ENCODE measurements at regions of chr10 and their contacts with region 1.

Region 1: DNA sequence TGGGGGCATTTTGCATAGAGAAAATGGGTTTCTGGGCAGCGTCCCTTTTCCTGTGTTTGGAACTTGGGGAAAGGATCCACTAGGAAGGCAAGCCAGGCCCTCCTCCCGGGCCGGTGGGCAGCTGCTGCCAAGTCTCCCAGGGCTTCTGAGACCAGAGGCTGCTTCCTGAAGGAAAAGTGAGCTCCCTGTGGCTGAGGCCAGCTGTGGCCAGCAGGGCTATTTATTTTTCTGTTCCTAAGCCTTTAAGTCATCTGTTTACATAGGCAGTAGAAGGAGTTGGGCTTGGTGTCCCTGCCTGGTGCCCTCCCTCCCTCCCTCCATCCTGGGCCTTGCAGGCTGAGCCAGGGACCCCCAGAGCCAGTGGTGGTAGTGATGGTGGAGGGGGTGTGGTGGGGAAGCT is 70.5 kb upstream of the COL13A1 start:
- DNase-seq: peak; percentile 91
- ATAC-seq: peak; percentile 75
- H3K4me3 ChIP-seq: no peak overlapping the region
- H3K27ac ChIP-seq: peak overlapping the region; percentile 69
- H3K4me1 ChIP-seq: peaks cover 56% of the 10 kb centered on the region
- H3K27me3 ChIP-seq: no peaks in the 10 kb centered on the region
- CTCF ChIP-seq: peak; percentile 29
- POLR2A ChIP-seq: no peak
- RAD21 ChIP-seq: peak; percentile 31; the same call in 1 of the 2 replicates

Region 2: DNA sequence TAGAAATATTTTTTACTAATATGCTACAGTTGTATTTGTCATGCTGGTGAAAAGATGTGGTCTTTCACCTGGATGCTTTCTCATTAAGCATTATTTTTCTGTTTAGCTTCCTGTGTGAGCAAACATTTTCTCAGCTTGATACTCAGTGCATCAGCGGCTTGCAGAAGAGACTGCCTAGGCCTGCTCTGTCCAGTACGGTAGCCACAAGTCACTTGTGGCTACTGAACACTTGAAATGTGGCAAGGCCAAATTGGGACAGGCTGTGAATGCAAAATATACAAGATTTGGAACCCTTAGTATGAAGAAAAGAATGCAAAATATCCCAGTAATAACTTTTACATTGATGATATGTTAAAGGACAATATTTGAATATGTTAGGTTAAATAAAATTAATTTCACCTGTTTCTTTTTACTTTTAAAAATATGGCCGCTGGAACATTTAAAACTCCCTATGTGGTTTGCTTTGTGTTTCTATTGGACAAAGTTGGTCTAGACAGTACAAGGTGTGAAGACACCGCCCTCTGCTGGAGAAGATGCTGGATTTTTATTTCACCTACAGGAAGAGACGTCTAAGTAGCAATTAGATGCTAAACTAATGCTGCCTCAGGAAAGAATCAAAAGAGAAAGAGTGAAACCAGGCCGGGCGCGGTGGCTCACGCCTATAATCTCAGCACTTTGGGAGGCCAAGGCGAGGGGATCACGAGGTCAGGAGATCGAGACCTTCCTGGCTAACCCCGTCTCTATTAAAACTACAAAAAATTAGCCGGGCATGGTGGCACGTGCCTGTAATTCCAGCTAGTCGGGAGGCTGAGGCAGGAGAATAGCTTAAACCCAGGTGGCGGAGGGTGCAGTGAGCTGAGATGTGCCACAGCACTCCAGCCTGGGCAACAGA is 638.0 kb before region 1 on chr10:
- CTCF ChIA-PET with region 1: no interaction called
- POLR2A ChIA-PET with region 1: no interaction called
- dilution Hi-C with region 1: no loop called
- in situ Hi-C with region 1: no loop called
- intact Hi-C with region 1: no loop called
- DNase-seq: peak; percentile 89
- ATAC-seq: peak; percentile 90
- H3K4me3 ChIP-seq: no peak overlapping the region
- H3K27ac ChIP-seq: no peak overlapping the region
- H3K4me1 ChIP-seq: peaks cover 6% of the 10 kb centered on the region
- H3K27me3 ChIP-seq: no peaks in the 10 kb centered on the region
- CTCF ChIP-seq: peak; percentile 87
- POLR2A ChIP-seq: no peak
- RAD21 ChIP-seq: peak; percentile 91

Region 3: DNA sequence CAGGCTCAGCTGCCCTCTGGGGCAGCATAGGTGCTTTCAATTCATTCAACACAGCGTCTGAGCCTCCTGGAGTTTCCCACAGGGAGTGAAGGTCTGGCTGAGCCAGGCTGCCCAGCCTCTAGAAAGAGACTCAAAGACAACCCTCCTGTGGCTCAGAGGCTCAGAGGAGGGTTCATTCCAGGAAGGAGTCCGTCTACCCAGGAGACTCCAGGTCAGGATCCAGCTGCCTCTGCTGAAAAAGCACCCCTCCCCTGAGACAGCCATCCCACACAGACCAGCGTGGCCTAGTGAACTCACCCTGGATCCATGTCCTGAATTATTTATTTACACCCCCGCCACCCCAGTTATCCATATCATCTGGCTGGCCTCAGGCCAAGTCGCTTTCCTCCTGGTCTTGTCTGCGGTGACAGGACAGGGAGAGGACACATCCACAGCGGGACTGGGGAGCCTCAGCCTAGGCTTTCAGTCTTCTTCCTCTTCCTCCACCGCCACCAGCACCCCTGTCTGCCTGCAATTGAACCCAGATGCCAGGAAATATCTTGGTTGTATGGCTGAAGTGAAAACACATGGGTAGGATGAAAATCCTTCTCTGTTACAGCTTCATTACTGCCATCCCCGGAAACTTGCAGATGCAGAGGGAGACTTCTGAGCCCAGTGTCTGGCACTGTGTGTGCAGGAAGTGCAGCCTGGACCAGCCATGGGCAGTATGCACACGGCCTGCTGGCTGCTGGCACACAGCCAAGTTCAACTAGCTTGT is 26.5 kb after region 1 on chr10:
- CTCF ChIA-PET with region 1: no interaction called
- POLR2A ChIA-PET with region 1: no interaction called
- dilution Hi-C with region 1: no loop called
- in situ Hi-C with region 1: no loop called
- intact Hi-C with region 1: no loop called
- DNase-seq: peak; percentile 41
- ATAC-seq: peak; percentile 44
- H3K4me3 ChIP-seq: no peak overlapping the region
- H3K27ac ChIP-seq: peak overlapping the region; percentile 12; the same call in 1 of the 2 replicates
- H3K4me1 ChIP-seq: peaks cover 20% of the 10 kb centered on the region; the same call in 1 of the 2 replicates
- H3K27me3 ChIP-seq: peaks cover 4% of the 10 kb centered on the region
- CTCF ChIP-seq: no peak
- POLR2A ChIP-seq: no peak
- RAD21 ChIP-seq: no peak

Region 4: GRCh38 chr10:69819716-69820506 is 88.7 kb after region 1 on chr10:
- CTCF ChIA-PET with region 1: no interaction called
- POLR2A ChIA-PET with region 1: no interaction called
- dilution Hi-C with region 1: no loop called
- in situ Hi-C with region 1: no loop called
- intact Hi-C with region 1: no loop called
- DNase-seq: peak; percentile 46
- ATAC-seq: peak; percentile 28; the same call in 1 of the 2 replicates
- H3K4me3 ChIP-seq: no peak overlapping the region
- H3K27ac ChIP-seq: peak overlapping the region; percentile 17; the same call in 1 of the 2 replicates
- H3K4me1 ChIP-seq: peaks cover 20% of the 10 kb centered on the region
- H3K27me3 ChIP-seq: no peaks in the 10 kb centered on the region
- CTCF ChIP-seq: no peak
- POLR2A ChIP-seq: no peak
- RAD21 ChIP-seq: no peak

Region 5: DNA sequence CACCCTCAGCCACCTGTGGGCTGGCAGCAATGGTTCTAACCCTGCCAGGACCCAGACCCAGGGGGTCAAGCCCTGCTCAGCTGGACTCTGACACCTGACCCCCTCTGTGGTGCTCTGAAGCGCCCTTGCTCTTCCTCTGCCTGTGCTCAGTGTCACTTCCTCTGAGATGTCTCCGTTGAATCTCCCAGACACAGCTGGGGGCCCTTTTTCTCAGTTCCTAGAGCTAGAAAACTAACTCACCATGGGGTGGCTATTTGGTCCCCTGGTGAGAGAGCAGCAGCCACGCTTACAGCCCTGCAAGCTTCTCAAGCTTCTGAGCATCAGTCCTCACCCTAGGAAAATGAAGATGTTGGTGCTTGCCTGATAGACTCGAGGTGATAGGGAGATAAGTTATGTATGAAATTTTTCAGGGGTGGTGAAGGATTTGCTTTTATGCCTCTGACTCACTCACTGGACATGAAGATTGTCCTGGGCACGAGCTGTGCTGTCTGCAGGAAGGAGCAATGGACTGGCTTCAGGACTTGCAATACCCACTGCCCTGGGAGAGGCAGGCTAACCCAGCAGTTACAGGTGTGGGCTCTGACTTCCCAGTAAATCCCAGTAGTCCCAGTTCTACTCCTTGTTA is 100.2 kb after region 1 on chr10:
- CTCF ChIA-PET with region 1: no interaction called
- POLR2A ChIA-PET with region 1: no interaction called
- dilution Hi-C with region 1: no loop called
- in situ Hi-C with region 1: no loop called
- intact Hi-C with region 1: no loop called
- DNase-seq: peak; percentile 42
- ATAC-seq: peak; percentile 81
- H3K4me3 ChIP-seq: no peak overlapping the region
- H3K27ac ChIP-seq: no peak overlapping the region
- H3K4me1 ChIP-seq: peaks cover 9% of the 10 kb centered on the region
- H3K27me3 ChIP-seq: no peaks in the 10 kb centered on the region
- CTCF ChIP-seq: 0 out of 2 replicates have a peak, but pooled peaks have one; percentile 3
- POLR2A ChIP-seq: no peak
- RAD21 ChIP-seq: no peak

Region 6: GRCh38 chr10:70664702-70665195 is 933.6 kb after region 1 on chr10:
- CTCF ChIA-PET with region 1: no interaction called
- POLR2A ChIA-PET with region 1: interaction called, 11 read pairs
- dilution Hi-C with region 1: no loop called
- in situ Hi-C with region 1: no loop called
- intact Hi-C with region 1: no loop called
- DNase-seq: peak; percentile 95
- ATAC-seq: peak; percentile 88
- H3K4me3 ChIP-seq: no peak overlapping the region
- H3K27ac ChIP-seq: peak overlapping the region; percentile 16; the same call in 1 of the 2 replicates
- H3K4me1 ChIP-seq: peaks cover 19% of the 10 kb centered on the region
- H3K27me3 ChIP-seq: peaks cover under 1% of the 10 kb centered on the region; the same call in 1 of the 2 replicates
- CTCF ChIP-seq: no peak
- POLR2A ChIP-seq: no peak
- RAD21 ChIP-seq: no peak